CD4-positive, alpha-beta T cell (primary cell): ENCODE measurements at regions of chr5 and their contacts with region 1.

Region 1: GRCh38 chr5:152532714-152533113 is 127.6 kb upstream of the NMUR2 start:
- DNase-seq: peak in 3 of 14 experiments; percentile 37 to 46 (median 37)
- ATAC-seq: no peak
- H3K4me3 ChIP-seq: no peak overlapping the region
- H3K4me3 Mint-ChIP-seq: no peak overlapping the region
- H3K27ac ChIP-seq: no peak overlapping the region
- H3K27ac Mint-ChIP-seq: no peak overlapping the region
- H3K4me1 ChIP-seq: peaks cover 3% of the 10 kb centered on the region
- H3K4me1 Mint-ChIP-seq: peaks cover under 1% of the 10 kb centered on the region
- H3K27me3 ChIP-seq: no peaks in the 10 kb centered on the region
- H3K27me3 Mint-ChIP-seq: no peaks in the 10 kb centered on the region
- CTCF ChIP-seq: no peak

Region 2: GRCh38 chr5:153964880-153965645 is 1432.3 kb after region 1 on chr5:
- CTCF ChIA-PET with region 1: interaction called, 3 read pairs
- POLR2A ChIA-PET with region 1: no interaction called
- intact Hi-C with region 1: loop called in 1 of 2 experiments (anchors 5 kb)
- DNase-seq: peak in 6 of 14 experiments; percentile 7 to 53 (median 40)
- ATAC-seq: no peak
- H3K4me3 ChIP-seq: no peak overlapping the region
- H3K4me3 Mint-ChIP-seq: no peak overlapping the region
- H3K27ac ChIP-seq: no peak overlapping the region
- H3K27ac Mint-ChIP-seq: no peak overlapping the region
- H3K4me1 ChIP-seq: peaks cover 9% of the 10 kb centered on the region
- H3K4me1 Mint-ChIP-seq: peaks cover 8% of the 10 kb centered on the region
- H3K27me3 ChIP-seq: peaks cover 0 to 2% of the 10 kb centered on the region in 2 experiments
- H3K27me3 Mint-ChIP-seq: peaks cover 11% of the 10 kb centered on the region
- CTCF ChIP-seq: peak; percentile 47